Activated CD4-positive, alpha-beta memory T cell treated with anti-CD3 and anti-CD28 coated beads, Interleukin-2, amount 10 ng/mL, durations not matched to agents 7 days and 5 days (primary cell): ENCODE measurements at regions of chr2 and their contacts with region 1.

Region 1: GRCh38 chr2:11778923-11779757 is 32.7 kb downstream of the LPIN1 start:
- DNase-seq: peak; percentile 85
- H3K4me3 Mint-ChIP-seq: peak overlapping the region; percentile 34
- H3K27ac Mint-ChIP-seq: peak overlapping the region; percentile 67
- H3K4me1 Mint-ChIP-seq: peaks cover 44% of the 10 kb centered on the region
- H3K27me3 Mint-ChIP-seq: no peaks in the 10 kb centered on the region

Region 2: GRCh38 chr2:11406958-11407381 is 372.2 kb before region 1 on chr2:
- CTCF ChIA-PET with region 1: no interaction called
- POLR2A ChIA-PET with region 1: no interaction called
- DNase-seq: no peak
- H3K4me3 Mint-ChIP-seq: no peak overlapping the region
- H3K27ac Mint-ChIP-seq: no peak overlapping the region
- H3K4me1 Mint-ChIP-seq: peaks cover 3% of the 10 kb centered on the region
- H3K27me3 Mint-ChIP-seq: peaks cover 4% of the 10 kb centered on the region

Region 3: GRCh38 chr2:11688222-11689069 is 90.7 kb before region 1 on chr2:
- CTCF ChIA-PET with region 1: interaction called, 327 read pairs
- POLR2A ChIA-PET with region 1: interaction called, 4 read pairs
- DNase-seq: peak; percentile 87
- H3K4me3 Mint-ChIP-seq: peak overlapping the region; percentile 38
- H3K27ac Mint-ChIP-seq: no peak overlapping the region
- H3K4me1 Mint-ChIP-seq: peaks cover 20% of the 10 kb centered on the region
- H3K27me3 Mint-ChIP-seq: peaks cover 14% of the 10 kb centered on the region

Region 4: GRCh38 chr2:11753886-11754699 is 25.0 kb before region 1 on chr2:
- CTCF ChIA-PET with region 1: interaction called, 75 read pairs
- POLR2A ChIA-PET with region 1: interaction called, 30 read pairs
- DNase-seq: peak; percentile 72
- H3K4me3 Mint-ChIP-seq: peak overlapping the region; percentile 63
- H3K27ac Mint-ChIP-seq: peak overlapping the region; percentile 94
- H3K4me1 Mint-ChIP-seq: peaks cover 92% of the 10 kb centered on the region
- H3K27me3 Mint-ChIP-seq: no peaks in the 10 kb centered on the region